CD4-positive, alpha-beta memory T cell (primary cell): ENCODE measurements at regions of chr18 and their contacts with region 1.

Region 1: DNA sequence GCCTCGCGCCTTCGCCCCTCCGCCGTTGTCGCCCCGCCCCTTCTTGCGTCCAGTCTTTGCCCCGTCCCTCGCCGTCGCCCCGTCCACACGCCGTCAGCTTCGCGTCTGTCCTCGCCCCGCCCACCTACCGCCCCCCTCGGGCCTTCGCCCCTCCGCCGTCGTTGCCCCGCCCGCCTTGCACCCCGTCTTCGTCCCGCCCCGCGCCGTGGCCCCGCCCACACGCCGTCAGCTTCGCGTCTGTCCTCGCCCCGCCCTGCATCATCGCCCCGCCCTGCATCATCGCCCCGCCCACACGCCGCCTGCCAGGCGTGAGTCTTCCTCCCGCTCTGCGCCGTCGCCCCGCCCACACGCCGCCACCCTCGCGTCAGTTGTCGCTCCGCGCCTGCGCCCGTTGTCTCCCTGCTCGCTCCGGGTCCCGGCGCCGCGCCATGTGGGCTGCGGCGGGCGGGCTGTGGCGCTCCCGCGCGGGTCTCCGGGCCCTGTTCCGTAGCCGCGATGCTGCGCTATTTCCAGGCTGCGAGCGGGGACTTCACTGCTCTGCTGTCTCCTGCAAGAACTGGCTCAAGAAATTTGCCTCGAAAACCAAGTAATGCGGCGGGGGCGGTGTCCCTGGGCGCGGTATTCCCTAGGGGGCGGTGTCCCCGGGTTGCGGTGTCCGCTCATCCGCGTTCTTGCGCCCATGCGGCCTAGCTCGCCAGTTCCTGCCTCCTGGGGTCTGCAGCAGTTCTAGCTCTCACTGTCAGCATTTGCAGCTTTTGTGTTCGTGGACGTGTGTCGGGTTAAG is at the start of gene RBFA:
- DNase-seq: peak; percentile 96 to 99 (median 98)
- H3K4me3 ChIP-seq: peak within 1 kb of the TSS; percentile 80 to 88
- H3K4me3 Mint-ChIP-seq: peak within 1 kb of the TSS; percentile 88 to 96 (median 92)
- H3K27ac ChIP-seq: peak within 1 kb of the TSS; percentile 80
- H3K27ac Mint-ChIP-seq: peak within 1 kb of the TSS; percentile 94 to 99 (median 97)
- H3K4me1 ChIP-seq: peaks cover 18% of the 10 kb centered on the region
- H3K4me1 Mint-ChIP-seq: peaks cover 15 to 38% (median 26%) of the 10 kb centered on the region in 4 donors
- H3K27me3 ChIP-seq: no peaks in the 10 kb centered on the region
- H3K27me3 Mint-ChIP-seq: no peaks in the 10 kb centered on the region
- total RNA-seq, gene RBFA: 14.5 to 14.9 TPM

Region 2: GRCh38 chr18:79400091-79400590 is 634.1 kb before region 1 on chr18:
- CTCF ChIA-PET with region 1: no interaction called
- POLR2A ChIA-PET with region 1: no interaction called
- intact Hi-C with region 1: loop called (anchors 5 kb)
- DNase-seq: peak; percentile 47 to 77 (median 51)
- H3K4me3 ChIP-seq: peak overlapping the region in 1 of 2 donors; percentile 58
- H3K4me3 Mint-ChIP-seq: peak overlapping the region in 2 of 8 donors; percentile 42 to 89
- H3K27ac ChIP-seq: peak overlapping the region; percentile 81
- H3K27ac Mint-ChIP-seq: no peak overlapping the region
- H3K4me1 ChIP-seq: peaks cover 68% of the 10 kb centered on the region
- H3K4me1 Mint-ChIP-seq: peaks cover 31 to 64% (median 50%) of the 10 kb centered on the region in 4 donors
- H3K27me3 ChIP-seq: no peaks in the 10 kb centered on the region
- H3K27me3 Mint-ChIP-seq: peaks cover 0 to 2% of the 10 kb centered on the region in 2 donors

Region 3: DNA sequence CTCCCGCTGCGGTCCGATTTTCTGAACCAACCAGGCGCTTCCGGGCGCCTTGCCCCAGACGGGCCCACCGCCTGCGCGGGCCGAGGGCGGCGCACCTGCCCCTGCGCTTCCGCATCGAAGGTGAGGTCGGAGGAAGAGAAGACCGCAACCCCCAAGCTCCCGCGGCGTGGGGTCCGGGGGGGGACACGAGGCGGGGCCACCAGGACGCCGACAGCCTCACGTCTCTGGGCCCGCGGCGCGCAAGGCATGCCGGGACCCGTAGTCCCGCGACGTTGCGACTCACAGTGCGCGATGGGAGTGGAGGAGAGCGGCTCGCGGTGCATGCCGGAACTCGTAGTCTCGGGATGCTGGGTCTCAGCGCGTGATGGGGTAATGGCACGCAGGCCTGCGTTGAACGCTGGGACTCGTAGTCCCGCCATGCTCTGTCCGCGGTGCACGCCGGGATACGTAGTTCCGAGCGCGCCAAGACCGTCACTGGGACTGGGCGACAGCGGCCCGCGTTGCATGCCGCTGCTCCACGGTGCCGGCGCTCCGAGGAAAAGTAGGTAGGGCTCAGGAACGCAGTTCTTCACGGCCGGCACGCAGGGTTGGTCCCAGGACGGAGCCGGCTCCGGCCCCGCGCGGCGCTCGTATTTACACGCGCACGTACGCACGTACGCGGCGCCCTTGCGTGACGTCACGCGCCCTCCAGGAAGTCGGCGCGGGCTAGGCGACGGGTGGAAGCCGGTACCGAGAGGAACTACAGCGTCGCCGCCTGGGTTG is 355.0 kb before region 1 on chr18 and contains the start of gene CTDP1:
- CTCF ChIA-PET with region 1: no interaction called
- POLR2A ChIA-PET with region 1: interaction called, 9 read pairs
- intact Hi-C with region 1: loop called (anchors 1 kb)
- DNase-seq: peak; percentile 98 to 99 (median 99)
- H3K4me3 ChIP-seq: peak within 1 kb of the TSS; percentile 75 to 88
- H3K4me3 Mint-ChIP-seq: peak within 1 kb of the TSS; percentile 95 to 100 (median 98)
- H3K27ac ChIP-seq: peak within 1 kb of the TSS; percentile 98
- H3K27ac Mint-ChIP-seq: peak within 1 kb of the TSS; percentile 99 to 100 (median 99)
- H3K4me1 ChIP-seq: peaks cover 53% of the 10 kb centered on the region
- H3K4me1 Mint-ChIP-seq: peaks cover 40 to 64% (median 54%) of the 10 kb centered on the region in 4 donors
- H3K27me3 ChIP-seq: no peaks in the 10 kb centered on the region
- H3K27me3 Mint-ChIP-seq: no peaks in the 10 kb centered on the region
- total RNA-seq, gene CTDP1: 42.6 to 44.5 TPM

Region 4: DNA sequence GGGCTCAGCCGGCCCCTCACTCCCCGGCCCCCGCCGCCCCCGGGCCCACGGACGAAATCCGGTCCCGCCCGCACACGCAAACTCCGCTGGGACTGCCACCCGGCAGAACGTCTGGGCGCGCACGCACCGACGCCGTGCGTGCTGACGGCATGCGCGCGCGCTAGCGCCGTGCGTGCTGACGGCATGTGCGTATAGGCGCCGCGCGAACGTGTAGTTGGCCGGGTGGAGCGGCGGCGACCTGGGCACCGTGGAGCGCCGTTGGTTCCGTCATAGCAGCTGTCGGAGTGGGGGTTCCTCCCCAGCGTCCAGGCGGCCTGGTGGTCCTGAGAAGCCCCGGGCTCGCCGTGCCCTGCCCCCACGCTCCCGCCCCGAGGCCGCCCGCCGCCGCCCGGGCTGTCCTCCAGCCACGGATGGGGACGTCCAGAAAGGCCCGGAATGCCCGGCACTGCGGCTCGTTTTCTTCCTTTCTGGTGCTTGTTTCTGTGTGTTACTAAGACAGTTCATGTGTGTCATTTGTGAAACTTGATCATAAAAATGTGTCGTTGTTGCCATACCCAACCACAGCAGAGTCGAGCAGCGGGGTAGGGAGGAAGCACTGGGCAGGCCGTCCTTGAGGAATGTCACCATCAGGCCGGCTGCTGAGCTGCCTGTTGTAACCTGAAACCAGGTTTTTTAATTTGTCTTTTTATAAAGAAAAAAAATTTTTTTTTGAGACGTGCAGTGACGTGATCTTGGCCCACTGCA is 45.6 kb before region 1 on chr18 and contains the start of gene TXNL4A:
- CTCF ChIA-PET with region 1: interaction called, 3 read pairs
- POLR2A ChIA-PET with region 1: interaction called, 33 read pairs
- intact Hi-C with region 1: loop called (anchors 1 kb)
- DNase-seq: peak; percentile 81 to 87 (median 84)
- H3K4me3 ChIP-seq: peak within 1 kb of the TSS; percentile 78 to 89
- H3K4me3 Mint-ChIP-seq: peak within 1 kb of the TSS; percentile 92 to 96 (median 94)
- H3K27ac ChIP-seq: peak within 1 kb of the TSS; percentile 95
- H3K27ac Mint-ChIP-seq: peak within 1 kb of the TSS; percentile 80 to 100 (median 98)
- H3K4me1 ChIP-seq: peaks cover 38% of the 10 kb centered on the region
- H3K4me1 Mint-ChIP-seq: peaks cover 28 to 49% (median 38%) of the 10 kb centered on the region in 4 donors
- H3K27me3 ChIP-seq: no peaks in the 10 kb centered on the region
- H3K27me3 Mint-ChIP-seq: no peaks in the 10 kb centered on the region
- total RNA-seq, gene TXNL4A: 72.6 to 76.1 TPM

Region 5: DNA sequence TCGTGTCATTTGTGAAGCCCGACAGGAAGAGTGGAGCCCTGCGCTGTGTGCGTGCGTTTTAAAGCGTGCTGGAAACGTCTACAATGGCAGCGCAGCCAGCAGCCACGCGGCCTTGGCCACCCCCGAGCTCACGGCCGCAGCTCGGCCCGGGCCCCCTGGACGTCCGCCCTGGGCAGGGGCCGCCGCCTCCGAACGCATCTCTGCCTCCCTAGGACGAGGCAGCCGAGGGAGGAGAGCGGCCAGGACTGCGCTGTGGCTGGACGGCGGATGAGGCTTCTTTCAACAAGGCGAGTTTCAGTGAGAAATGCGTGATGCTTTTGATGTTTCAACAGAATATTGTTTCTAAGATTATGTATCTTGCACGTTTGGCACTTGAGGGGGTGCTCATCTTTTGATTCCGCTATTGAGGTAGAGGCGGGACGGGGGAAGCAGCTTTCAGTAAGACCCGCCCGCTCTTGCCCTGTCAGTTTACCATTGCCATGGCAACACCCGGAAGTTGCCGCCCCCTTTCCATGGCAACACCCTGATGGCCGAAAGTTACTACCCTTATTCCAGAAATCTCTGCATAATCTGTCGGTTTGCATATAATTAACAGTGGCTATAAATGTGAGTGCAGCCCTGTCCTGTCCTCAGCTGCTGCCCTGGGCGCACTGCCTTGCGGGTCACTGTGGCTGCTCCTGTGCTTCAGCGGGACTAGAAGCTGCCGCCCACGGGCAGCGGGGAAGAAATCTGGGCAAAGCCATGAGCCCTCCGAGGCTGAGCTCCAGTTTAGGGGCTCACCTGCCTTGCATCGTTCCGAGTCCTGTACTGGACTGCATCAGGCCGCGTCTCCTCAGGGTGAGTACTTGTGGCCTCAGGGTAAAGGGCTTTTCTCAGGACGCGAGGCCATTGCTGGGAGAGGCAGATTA is 113.4 kb after region 1 on chr18:
- CTCF ChIA-PET with region 1: no interaction called
- POLR2A ChIA-PET with region 1: no interaction called
- intact Hi-C with region 1: loop called (anchors 1 kb)
- DNase-seq: peak; percentile 60 to 83 (median 62)
- H3K4me3 ChIP-seq: peak overlapping the region; percentile 9 to 54
- H3K4me3 Mint-ChIP-seq: peak overlapping the region; percentile 84 to 94 (median 86)
- H3K27ac ChIP-seq: no peak overlapping the region
- H3K27ac Mint-ChIP-seq: peak overlapping the region in 6 of 7 donors; percentile 19 to 72 (median 48)
- H3K4me1 ChIP-seq: peaks cover 15% of the 10 kb centered on the region
- H3K4me1 Mint-ChIP-seq: peaks cover 5 to 34% (median 14%) of the 10 kb centered on the region in 4 donors
- H3K27me3 ChIP-seq: peaks cover 4% of the 10 kb centered on the region
- H3K27me3 Mint-ChIP-seq: peaks cover 6 to 11% of the 10 kb centered on the region in 2 donors